B cell (primary cell): ENCODE measurements at regions of chr6 and their contacts with region 1.

Region 1: DNA sequence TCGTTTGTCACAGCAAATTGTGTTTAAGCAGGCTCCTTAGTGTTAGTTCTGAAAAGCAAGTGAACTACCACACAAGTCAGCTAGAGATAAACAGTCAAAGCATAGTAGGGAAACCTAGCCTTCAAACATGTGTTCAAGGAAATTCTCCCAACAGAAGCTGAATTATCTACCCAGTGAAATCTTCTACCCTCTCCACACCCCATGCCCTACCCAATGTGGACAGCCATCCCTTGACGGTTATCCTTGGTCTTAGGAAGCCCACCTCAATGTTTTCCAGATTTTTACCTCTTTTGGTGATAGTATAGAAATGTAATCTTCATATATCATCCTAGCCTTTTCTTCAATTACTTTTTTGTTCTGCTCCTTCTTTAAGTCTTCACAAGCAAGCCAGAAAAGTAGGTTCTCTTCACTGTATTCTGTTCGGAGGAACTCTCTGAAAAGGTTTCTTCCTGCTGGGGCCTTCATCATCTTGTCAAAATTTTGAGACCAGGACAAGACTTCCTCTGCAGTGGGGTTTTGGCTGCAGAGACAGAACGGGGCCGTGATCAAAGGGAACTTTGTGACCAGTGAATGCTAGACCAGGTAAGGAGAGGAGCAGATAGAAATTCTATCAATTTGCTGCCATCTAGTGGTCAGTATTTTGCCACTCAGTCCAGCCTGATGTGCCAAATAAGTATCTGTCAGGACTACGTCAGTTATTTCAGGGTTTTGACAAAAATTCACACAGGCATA is 21.6 kb upstream of the MTRF1L start:
- DNase-seq: peak; percentile 74
- ATAC-seq: peak; percentile 81
- H3K4me3 ChIP-seq: no peak overlapping the region
- H3K4me3 Mint-ChIP-seq: no peak overlapping the region
- H3K27ac ChIP-seq: no peak overlapping the region
- H3K27ac Mint-ChIP-seq: no peak overlapping the region
- H3K4me1 ChIP-seq: peaks cover 0 to 3% of the 10 kb centered on the region in 2 donors
- H3K4me1 Mint-ChIP-seq: no peaks in the 10 kb centered on the region
- H3K27me3 ChIP-seq: peaks cover 0 to 4% (median 0%) of the 10 kb centered on the region in 4 experiments
- H3K27me3 Mint-ChIP-seq: peaks cover 28% of the 10 kb centered on the region
- CTCF ChIP-seq: peak; percentile 91

Region 2: GRCh38 chr6:152948150-152948768 is 75.9 kb before region 1 on chr6:
- CTCF ChIA-PET with region 1: interaction called, 5 read pairs
- POLR2A ChIA-PET with region 1: no interaction called
- intact Hi-C with region 1: loop called (anchors 1 kb)
- DNase-seq: peak; percentile 47
- ATAC-seq: peak; percentile 39
- H3K4me3 ChIP-seq: no peak overlapping the region
- H3K4me3 Mint-ChIP-seq: no peak overlapping the region
- H3K27ac ChIP-seq: no peak overlapping the region
- H3K27ac Mint-ChIP-seq: no peak overlapping the region
- H3K4me1 ChIP-seq: peaks cover 5 to 6% of the 10 kb centered on the region in 2 donors
- H3K4me1 Mint-ChIP-seq: peaks cover 5% of the 10 kb centered on the region
- H3K27me3 ChIP-seq: peaks cover 0 to 4% (median 0%) of the 10 kb centered on the region in 4 experiments
- H3K27me3 Mint-ChIP-seq: peaks cover 28% of the 10 kb centered on the region
- CTCF ChIP-seq: peak; percentile 77

Region 3: GRCh38 chr6:153525998-153526397 is 501.9 kb after region 1 on chr6:
- CTCF ChIA-PET with region 1: no interaction called
- POLR2A ChIA-PET with region 1: no interaction called
- intact Hi-C with region 1: no loop called
- DNase-seq: no peak
- ATAC-seq: no peak
- H3K4me3 ChIP-seq: no peak overlapping the region
- H3K4me3 Mint-ChIP-seq: no peak overlapping the region
- H3K27ac ChIP-seq: no peak overlapping the region
- H3K27ac Mint-ChIP-seq: no peak overlapping the region
- H3K4me1 ChIP-seq: no peaks in the 10 kb centered on the region
- H3K4me1 Mint-ChIP-seq: no peaks in the 10 kb centered on the region
- H3K27me3 ChIP-seq: no peaks in the 10 kb centered on the region
- H3K27me3 Mint-ChIP-seq: no peaks in the 10 kb centered on the region
- CTCF ChIP-seq: no peak

Region 4: DNA sequence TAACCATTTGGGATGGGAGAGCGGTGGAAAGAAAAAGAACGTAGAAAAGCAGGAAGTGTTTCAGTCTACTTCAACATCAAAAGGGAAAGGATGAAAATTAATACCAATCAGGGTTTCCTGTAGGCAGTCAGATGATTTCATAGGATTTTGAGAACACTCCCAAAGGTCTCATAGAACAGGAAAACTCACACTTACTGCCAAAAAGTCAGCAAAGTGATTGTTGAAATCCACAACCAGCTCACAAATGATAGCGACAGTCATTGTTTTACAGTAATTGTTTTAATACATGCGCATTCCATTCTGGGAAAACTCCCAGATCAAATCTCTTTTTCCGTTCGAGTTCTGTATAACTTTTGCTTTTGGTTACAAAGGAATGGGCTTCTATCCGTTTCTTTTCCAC is 1491.7 kb after region 1 on chr6:
- CTCF ChIA-PET with region 1: no interaction called
- POLR2A ChIA-PET with region 1: no interaction called
- intact Hi-C with region 1: no loop called
- DNase-seq: no peak
- ATAC-seq: no peak
- H3K4me3 ChIP-seq: no peak overlapping the region
- H3K4me3 Mint-ChIP-seq: no peak overlapping the region
- H3K27ac ChIP-seq: no peak overlapping the region
- H3K27ac Mint-ChIP-seq: no peak overlapping the region
- H3K4me1 ChIP-seq: no peaks in the 10 kb centered on the region
- H3K4me1 Mint-ChIP-seq: peaks cover 4% of the 10 kb centered on the region
- H3K27me3 ChIP-seq: peaks cover 0 to 10% (median 7%) of the 10 kb centered on the region in 4 experiments
- H3K27me3 Mint-ChIP-seq: peaks cover 34% of the 10 kb centered on the region
- CTCF ChIP-seq: no peak